Endothelial cell of umbilical vein (primary cell): ENCODE measurements at regions of chr6 and their contacts with region 1.

Region 1: GRCh38 chr6:54112151-54112650 is 958 bp downstream of the MLIP start:
- DNase-seq: peak; percentile 91
- H3K4me3 ChIP-seq: peak overlapping the region in 1 of 3 experiments; percentile 28
- H3K27ac ChIP-seq: peak overlapping the region; percentile 89
- H3K4me1 ChIP-seq: peaks cover 38% of the 10 kb centered on the region
- H3K27me3 ChIP-seq: no peaks in the 10 kb centered on the region
- CTCF ChIP-seq: no peak
- POLR2A ChIP-seq: peak; percentile 56

Region 2: GRCh38 chr6:53391170-53391569 is 721.0 kb before region 1 on chr6:
- CTCF ChIA-PET with region 1: no interaction called
- POLR2A ChIA-PET with region 1: no interaction called
- dilution Hi-C with region 1: no loop called
- intact Hi-C with region 1: no loop called
- DNase-seq: peak; percentile 71
- H3K4me3 ChIP-seq: no peak overlapping the region
- H3K27ac ChIP-seq: no peak overlapping the region
- H3K4me1 ChIP-seq: no peaks in the 10 kb centered on the region
- H3K27me3 ChIP-seq: peaks cover 2 to 4% of the 10 kb centered on the region in 2 experiments
- CTCF ChIP-seq: no peak
- POLR2A ChIP-seq: no peak

Region 3: GRCh38 chr6:53734473-53735299 is 377.5 kb before region 1 on chr6:
- CTCF ChIA-PET with region 1: no interaction called
- POLR2A ChIA-PET with region 1: no interaction called
- dilution Hi-C with region 1: no loop called
- intact Hi-C with region 1: loop called (anchors 5 kb)
- DNase-seq: peak; percentile 75
- H3K4me3 ChIP-seq: peak overlapping the region in 1 of 3 experiments; percentile 18
- H3K27ac ChIP-seq: peak overlapping the region; percentile 98
- H3K4me1 ChIP-seq: peaks cover 40% of the 10 kb centered on the region
- H3K27me3 ChIP-seq: no peaks in the 10 kb centered on the region
- CTCF ChIP-seq: peak; percentile 25 to 43
- POLR2A ChIP-seq: no peak

Region 4: GRCh38 chr6:53825532-53826321 is 286.5 kb before region 1 on chr6:
- CTCF ChIA-PET with region 1: no interaction called
- POLR2A ChIA-PET with region 1: no interaction called
- dilution Hi-C with region 1: no loop called
- intact Hi-C with region 1: no loop called
- DNase-seq: no peak
- H3K4me3 ChIP-seq: no peak overlapping the region
- H3K27ac ChIP-seq: no peak overlapping the region
- H3K4me1 ChIP-seq: peaks cover 9% of the 10 kb centered on the region
- H3K27me3 ChIP-seq: no peaks in the 10 kb centered on the region
- CTCF ChIP-seq: no peak
- POLR2A ChIP-seq: no peak

Region 5: GRCh38 chr6:54060286-54060685 is 51.9 kb before region 1 on chr6:
- CTCF ChIA-PET with region 1: interaction called, 5 read pairs
- POLR2A ChIA-PET with region 1: no interaction called
- dilution Hi-C with region 1: no loop called
- intact Hi-C with region 1: loop called (anchors 1 kb)
- DNase-seq: peak; percentile 59
- H3K4me3 ChIP-seq: no peak overlapping the region
- H3K27ac ChIP-seq: peak overlapping the region; percentile 53
- H3K4me1 ChIP-seq: peaks cover 15% of the 10 kb centered on the region
- H3K27me3 ChIP-seq: no peaks in the 10 kb centered on the region
- CTCF ChIP-seq: no peak
- POLR2A ChIP-seq: no peak

Region 6: DNA sequence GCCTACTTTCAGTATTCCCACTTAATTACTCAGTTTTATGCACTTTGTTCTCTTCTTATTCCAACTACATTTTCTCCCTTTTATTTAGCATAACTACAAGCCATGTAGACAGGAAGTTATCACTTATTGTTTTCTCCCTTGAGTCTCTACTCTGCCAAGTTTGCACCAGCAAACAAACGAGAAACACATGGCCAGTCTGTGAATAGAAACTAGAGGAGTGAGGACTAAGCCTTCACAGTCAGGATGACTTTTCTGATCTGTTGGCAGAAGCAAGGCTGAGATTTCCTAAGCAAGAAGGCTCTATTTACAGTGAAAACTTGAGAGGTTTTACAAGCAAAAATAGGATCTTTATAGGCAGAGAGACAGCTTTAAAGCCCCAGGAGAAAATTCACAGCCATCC is 126.2 kb after region 1 on chr6:
- CTCF ChIA-PET with region 1: no interaction called
- POLR2A ChIA-PET with region 1: no interaction called
- dilution Hi-C with region 1: no loop called
- intact Hi-C with region 1: loop called (anchors 5 kb)
- DNase-seq: peak; percentile 90
- H3K4me3 ChIP-seq: no peak overlapping the region
- H3K27ac ChIP-seq: peak overlapping the region; percentile 11
- H3K4me1 ChIP-seq: no peaks in the 10 kb centered on the region
- H3K27me3 ChIP-seq: no peaks in the 10 kb centered on the region
- CTCF ChIP-seq: no peak
- POLR2A ChIP-seq: no peak

Region 7: GRCh38 chr6:54335871-54336270 is 223.7 kb after region 1 on chr6:
- CTCF ChIA-PET with region 1: no interaction called
- POLR2A ChIA-PET with region 1: no interaction called
- dilution Hi-C with region 1: no loop called
- intact Hi-C with region 1: loop called (anchors 1 kb)
- DNase-seq: peak; percentile 99
- H3K4me3 ChIP-seq: no peak overlapping the region
- H3K27ac ChIP-seq: peak overlapping the region; percentile 94
- H3K4me1 ChIP-seq: peaks cover 28% of the 10 kb centered on the region
- H3K27me3 ChIP-seq: no peaks in the 10 kb centered on the region
- CTCF ChIP-seq: no peak
- POLR2A ChIP-seq: peak; percentile 90

Region 8: DNA sequence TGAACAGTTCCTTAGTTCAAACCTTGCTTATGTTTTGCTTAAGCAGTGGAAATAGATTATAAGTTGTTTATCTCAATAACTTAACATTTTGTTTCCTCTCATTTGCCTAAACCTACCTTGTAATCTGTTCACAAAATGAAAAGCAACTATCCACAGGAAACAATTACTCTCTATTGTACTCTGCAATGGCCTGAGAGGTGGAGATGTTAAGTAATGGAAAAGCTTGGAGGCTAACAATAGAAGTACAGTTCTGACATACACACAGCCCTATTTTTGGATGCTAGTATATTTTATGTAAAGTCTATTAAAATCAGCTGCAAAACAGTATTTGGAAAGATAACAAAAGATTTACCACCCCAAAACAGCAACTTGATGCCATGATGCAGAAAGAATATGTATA is 278.2 kb after region 1 on chr6:
- CTCF ChIA-PET with region 1: no interaction called
- POLR2A ChIA-PET with region 1: no interaction called
- dilution Hi-C with region 1: no loop called
- intact Hi-C with region 1: no loop called
- DNase-seq: peak; percentile 27
- H3K4me3 ChIP-seq: no peak overlapping the region
- H3K27ac ChIP-seq: no peak overlapping the region
- H3K4me1 ChIP-seq: no peaks in the 10 kb centered on the region
- H3K27me3 ChIP-seq: no peaks in the 10 kb centered on the region
- CTCF ChIP-seq: no peak
- POLR2A ChIP-seq: no peak